ENCODE measurements at regions of chr2 and their contacts with region 1.

Region 1: DNA sequence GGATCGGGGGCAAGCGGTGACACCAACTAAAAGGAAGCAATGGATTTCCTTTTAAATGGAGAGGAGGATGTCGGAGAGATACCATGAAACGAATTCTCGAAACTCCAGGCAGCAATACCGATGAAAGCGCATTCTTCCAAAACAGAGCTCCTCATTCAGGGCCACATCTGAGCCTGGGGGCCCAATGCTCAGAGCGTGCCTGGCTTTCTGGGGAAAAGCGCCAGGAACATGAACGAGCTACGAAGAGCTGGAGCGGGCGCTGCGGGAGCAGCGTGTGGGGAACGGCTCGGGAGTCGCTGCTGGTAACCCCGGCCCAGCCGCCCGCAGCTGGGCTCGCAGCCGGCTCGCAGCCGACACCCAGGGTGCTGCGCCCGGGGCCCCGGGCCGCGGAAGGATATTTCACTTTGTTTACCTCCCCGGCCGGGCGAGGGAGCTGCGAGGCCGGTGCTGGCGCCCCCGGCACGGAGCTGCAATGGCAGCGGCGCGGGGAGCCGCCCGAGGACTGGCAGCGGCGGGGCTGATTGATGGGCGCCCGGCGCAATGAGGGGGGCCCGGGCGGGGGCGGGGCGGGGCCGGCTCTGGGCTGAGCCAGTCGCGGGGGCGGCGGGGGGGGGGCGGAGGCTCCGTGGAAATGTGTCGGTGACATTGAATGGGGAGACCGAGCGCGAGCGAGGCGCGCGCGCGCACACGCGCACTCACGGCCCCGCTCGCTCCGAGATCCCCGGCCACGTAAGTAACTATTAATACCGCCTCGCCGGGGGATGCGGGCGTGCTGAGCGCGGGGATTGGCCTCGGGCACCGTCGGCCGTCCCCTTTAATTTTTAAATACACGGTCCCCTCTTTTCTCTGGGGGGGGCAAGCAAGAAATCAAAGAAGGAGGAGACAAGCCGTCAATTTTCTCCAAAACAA is at the start of gene TRIB2:
- DNase-seq: peak; percentile 90
- H3K4me3 ChIP-seq: peak within 1 kb of the TSS; percentile 98
- H3K27ac ChIP-seq: peak within 1 kb of the TSS; percentile 66
- H3K4me1 ChIP-seq: peaks cover 32% of the 10 kb centered on the region
- H3K27me3 ChIP-seq: no peaks in the 10 kb centered on the region
- total RNA-seq, gene TRIB2: 43.8 and 46.9 TPM in 2 replicates

Region 2: DNA sequence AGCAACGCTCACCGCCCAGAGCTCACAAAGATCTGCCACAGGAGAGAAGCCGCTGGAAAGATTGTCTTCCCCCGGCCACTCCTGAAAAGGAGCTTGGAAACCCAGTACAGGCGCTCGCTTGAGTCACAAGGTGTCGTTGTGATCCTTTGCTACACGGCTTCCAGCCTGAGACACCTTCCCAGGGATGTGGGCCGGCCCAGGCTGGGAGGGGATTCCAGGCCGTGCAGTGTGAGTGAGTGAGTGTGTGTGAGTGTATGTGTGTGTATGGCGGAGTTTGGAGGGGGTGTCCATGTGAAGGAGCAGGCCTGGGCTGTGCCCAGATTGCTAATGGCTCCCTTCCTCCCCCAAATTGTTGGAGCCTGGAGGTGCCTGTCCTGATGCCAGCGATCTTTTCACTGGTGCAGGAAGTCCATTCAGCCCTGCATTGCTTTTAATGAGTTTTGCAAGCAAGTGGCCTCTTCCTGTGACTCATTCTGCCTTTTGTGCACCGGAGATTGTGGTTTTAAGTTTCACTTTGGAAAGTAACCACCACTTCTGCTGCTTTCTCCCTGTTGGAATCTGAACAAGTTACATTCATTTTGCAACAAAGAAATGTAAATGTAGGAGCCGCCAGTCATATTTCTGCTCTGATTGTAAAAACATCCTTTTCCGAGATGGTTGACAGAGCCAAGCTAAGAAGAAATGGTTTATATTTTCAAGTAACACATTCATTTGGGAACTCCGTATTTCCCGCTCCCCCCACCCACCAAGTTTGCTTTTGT is 886.4 kb before region 1 on chr2:
- in situ Hi-C with region 1: loop called (anchors 10 kb)
- DNase-seq: peak; percentile 97
- H3K4me3 ChIP-seq: peak overlapping the region; percentile 67
- H3K27ac ChIP-seq: peak overlapping the region; percentile 64
- H3K4me1 ChIP-seq: peaks cover 38% of the 10 kb centered on the region
- H3K27me3 ChIP-seq: no peaks in the 10 kb centered on the region

Region 3: DNA sequence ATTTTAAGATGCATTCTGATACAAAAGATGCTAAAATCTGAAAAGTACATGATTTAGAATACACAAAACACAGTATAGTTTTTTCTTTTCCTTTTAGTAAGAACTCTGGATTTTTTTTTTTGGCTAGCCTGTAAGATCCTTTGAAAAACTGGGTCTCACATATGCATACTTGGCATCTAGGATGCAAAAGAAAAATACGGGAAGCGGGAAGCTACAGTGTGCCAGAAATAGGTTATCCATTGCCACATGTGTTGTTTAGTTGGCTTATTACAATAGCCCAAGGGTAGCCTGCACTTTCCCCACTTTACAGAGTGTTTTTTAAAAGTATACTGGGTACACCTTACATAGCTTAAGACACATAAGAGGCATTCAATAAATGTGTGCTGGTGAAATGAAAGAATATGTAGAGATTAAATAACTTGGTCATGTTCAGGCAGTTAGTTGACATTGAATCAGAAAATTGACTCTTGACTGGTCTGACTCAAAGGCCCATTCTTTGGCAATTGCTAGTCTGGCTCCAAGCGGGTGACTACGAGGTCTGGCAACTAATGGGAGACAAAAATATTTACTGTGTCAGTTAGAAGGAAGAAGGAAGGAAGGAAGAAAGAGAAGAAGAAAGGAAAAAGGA is 286.6 kb before region 1 on chr2:
- in situ Hi-C with region 1: loop called (anchors 10 kb)
- DNase-seq: peak; percentile 89
- H3K4me3 ChIP-seq: no peak overlapping the region
- H3K27ac ChIP-seq: peak overlapping the region; percentile 47
- H3K4me1 ChIP-seq: peaks cover 25% of the 10 kb centered on the region
- H3K27me3 ChIP-seq: no peaks in the 10 kb centered on the region

Region 4: GRCh38 chr2:13006829-13007717 is 290.5 kb after region 1 on chr2:
- in situ Hi-C with region 1: loop called (anchors 10 kb)
- DNase-seq: peak; percentile 73
- H3K4me3 ChIP-seq: peak overlapping the region; percentile 26; the same call in 1 of the 2 replicates
- H3K27ac ChIP-seq: no peak overlapping the region
- H3K4me1 ChIP-seq: peaks cover 12% of the 10 kb centered on the region; the same call in 1 of the 2 replicates
- H3K27me3 ChIP-seq: no peaks in the 10 kb centered on the region

Region 5: GRCh38 chr2:13495051-13495450 is 778.5 kb after region 1 on chr2:
- in situ Hi-C with region 1: no loop called
- DNase-seq: no peak
- H3K4me3 ChIP-seq: no peak overlapping the region
- H3K27ac ChIP-seq: no peak overlapping the region
- H3K4me1 ChIP-seq: no peaks in the 10 kb centered on the region
- H3K27me3 ChIP-seq: no peaks in the 10 kb centered on the region

Measured in GM23248 (cell line).